Left colon (tissue), 2 donors: ENCODE measurements at regions of chr18 and their contacts with region 1.

Region 1: GRCh38 chr18:12737243-12737902 is 34.5 kb downstream of the PSMG2 start:
- DNase-seq: no peak
- ATAC-seq: no peak

Region 2: DNA sequence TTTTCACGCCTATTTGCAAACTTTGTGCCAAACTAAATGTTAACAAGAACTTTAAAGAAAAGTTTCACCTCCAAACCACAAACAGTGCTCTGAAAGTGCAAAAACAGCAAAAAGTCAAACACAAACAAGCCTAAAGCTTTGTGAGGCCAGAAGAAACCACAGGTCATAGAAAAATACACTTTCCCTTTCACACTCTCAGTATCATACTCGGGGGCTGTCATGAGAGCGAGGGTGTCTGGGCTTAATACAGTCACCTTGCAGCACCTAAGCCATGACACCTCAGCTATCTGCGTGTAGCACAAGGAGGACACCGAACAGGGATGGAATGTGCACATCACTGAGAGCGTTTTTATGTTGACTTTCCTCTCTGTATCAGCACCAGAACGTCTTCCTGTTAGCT is 183.8 kb after region 1 on chr18:
- intact Hi-C with region 1: loop called in 1 of 2 experiments (anchors 10 kb)
- DNase-seq: no peak
- ATAC-seq: no peak